HepG2 (cell line): ENCODE measurements at regions of chr14 and their contacts with region 1.

Region 1: GRCh38 chr14:32076278-32077080 is 625 bp upstream of the ARHGAP5 start:
- DNase-seq: peak; percentile 98
- ATAC-seq: peak; percentile 78
- H3K4me3 ChIP-seq: peak overlapping the region; percentile 90 to 99 (median 99)
- H3K27ac ChIP-seq: peak overlapping the region; percentile 86
- H3K4me1 ChIP-seq: peaks cover 39% of the 10 kb centered on the region
- H3K27me3 ChIP-seq: peaks cover 0 to 6% of the 10 kb centered on the region in 2 experiments; a peak in 1 of 5 replicates
- CTCF ChIP-seq: 0 out of 2 replicates have a peak, but pooled peaks have one; percentile 13
- EP300 ChIP-seq: peak in 1 of 2 experiments; percentile 54; a peak in 1 of 4 replicates
- POLR2A ChIP-seq: no peak; a peak in 2 of 4 replicates
- RAD21 ChIP-seq: no peak; the same call in none of the 2 replicates

Region 2: GRCh38 chr14:30573226-30573814 is 1503.2 kb before region 1 on chr14:
- CTCF ChIA-PET with region 1: no interaction called
- POLR2A ChIA-PET with region 1: no interaction called
- in situ Hi-C with region 1: no loop called
- intact Hi-C with region 1: loop called (anchors 5 kb)
- DNase-seq: no peak
- ATAC-seq: no peak
- H3K4me3 ChIP-seq: no peak overlapping the region
- H3K27ac ChIP-seq: no peak overlapping the region
- H3K4me1 ChIP-seq: peaks cover 40% of the 10 kb centered on the region
- H3K27me3 ChIP-seq: no peaks in the 10 kb centered on the region
- CTCF ChIP-seq: no peak
- EP300 ChIP-seq: no peak
- POLR2A ChIP-seq: no peak
- RAD21 ChIP-seq: no peak

Region 3: DNA sequence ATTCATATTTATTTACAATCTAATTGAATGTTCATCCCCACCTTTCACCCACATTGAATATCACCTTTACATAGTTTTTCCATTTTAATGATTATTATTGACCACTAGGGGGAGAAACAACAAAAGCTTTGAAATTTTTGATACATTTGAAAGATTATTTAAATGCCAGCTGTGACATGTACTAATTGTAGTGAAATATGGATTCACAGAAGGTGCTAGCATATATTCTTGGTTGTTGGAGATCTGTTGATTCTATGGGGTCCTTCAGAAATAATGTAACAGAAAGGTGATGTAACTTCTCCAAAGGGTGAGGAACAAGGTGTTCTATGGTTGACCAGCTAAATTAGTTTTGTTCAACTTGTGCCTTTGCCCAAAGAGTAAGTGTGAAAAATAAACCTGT is 566.3 kb before region 1 on chr14:
- CTCF ChIA-PET with region 1: interaction called, 5 read pairs
- POLR2A ChIA-PET with region 1: no interaction called
- in situ Hi-C with region 1: no loop called
- intact Hi-C with region 1: loop called (anchors 1 kb)
- DNase-seq: peak; percentile 48
- ATAC-seq: no peak
- H3K4me3 ChIP-seq: no peak overlapping the region
- H3K27ac ChIP-seq: no peak overlapping the region
- H3K4me1 ChIP-seq: 0 out of 2 replicates have a peak, but pooled peaks cover 5% of the 10 kb centered on the region
- H3K27me3 ChIP-seq: peaks cover 0 to 10% of the 10 kb centered on the region in 2 experiments; a peak in 2 of 5 replicates
- CTCF ChIP-seq: peak; percentile 74
- EP300 ChIP-seq: no peak
- POLR2A ChIP-seq: no peak
- RAD21 ChIP-seq: peak; percentile 67

Region 4: GRCh38 chr14:31945074-31945613 is 131.3 kb before region 1 on chr14:
- CTCF ChIA-PET with region 1: interaction called, 3 read pairs
- POLR2A ChIA-PET with region 1: interaction called, 10 read pairs
- in situ Hi-C with region 1: no loop called
- intact Hi-C with region 1: no loop called
- DNase-seq: peak; percentile 60
- ATAC-seq: peak; percentile 29
- H3K4me3 ChIP-seq: peak overlapping the region; percentile 41 to 62 (median 44)
- H3K27ac ChIP-seq: peak overlapping the region; percentile 27
- H3K4me1 ChIP-seq: peaks cover 64% of the 10 kb centered on the region
- H3K27me3 ChIP-seq: no peaks in the 10 kb centered on the region
- CTCF ChIP-seq: no peak
- EP300 ChIP-seq: no peak; a peak in 1 of 4 replicates
- POLR2A ChIP-seq: no peak
- RAD21 ChIP-seq: no peak

Region 5: GRCh38 chr14:32028599-32028998 is 47.9 kb before region 1 on chr14:
- CTCF ChIA-PET with region 1: no interaction called
- POLR2A ChIA-PET with region 1: no interaction called
- in situ Hi-C with region 1: no loop called
- intact Hi-C with region 1: no loop called
- DNase-seq: no peak
- ATAC-seq: peak; percentile 34; the same call in 2 of the 3 replicates
- H3K4me3 ChIP-seq: no peak overlapping the region
- H3K27ac ChIP-seq: no peak overlapping the region
- H3K4me1 ChIP-seq: no peaks in the 10 kb centered on the region
- H3K27me3 ChIP-seq: no peaks in the 10 kb centered on the region; a peak in 2 of 5 replicates
- CTCF ChIP-seq: no peak
- EP300 ChIP-seq: no peak
- POLR2A ChIP-seq: no peak
- RAD21 ChIP-seq: no peak

Region 6: DNA sequence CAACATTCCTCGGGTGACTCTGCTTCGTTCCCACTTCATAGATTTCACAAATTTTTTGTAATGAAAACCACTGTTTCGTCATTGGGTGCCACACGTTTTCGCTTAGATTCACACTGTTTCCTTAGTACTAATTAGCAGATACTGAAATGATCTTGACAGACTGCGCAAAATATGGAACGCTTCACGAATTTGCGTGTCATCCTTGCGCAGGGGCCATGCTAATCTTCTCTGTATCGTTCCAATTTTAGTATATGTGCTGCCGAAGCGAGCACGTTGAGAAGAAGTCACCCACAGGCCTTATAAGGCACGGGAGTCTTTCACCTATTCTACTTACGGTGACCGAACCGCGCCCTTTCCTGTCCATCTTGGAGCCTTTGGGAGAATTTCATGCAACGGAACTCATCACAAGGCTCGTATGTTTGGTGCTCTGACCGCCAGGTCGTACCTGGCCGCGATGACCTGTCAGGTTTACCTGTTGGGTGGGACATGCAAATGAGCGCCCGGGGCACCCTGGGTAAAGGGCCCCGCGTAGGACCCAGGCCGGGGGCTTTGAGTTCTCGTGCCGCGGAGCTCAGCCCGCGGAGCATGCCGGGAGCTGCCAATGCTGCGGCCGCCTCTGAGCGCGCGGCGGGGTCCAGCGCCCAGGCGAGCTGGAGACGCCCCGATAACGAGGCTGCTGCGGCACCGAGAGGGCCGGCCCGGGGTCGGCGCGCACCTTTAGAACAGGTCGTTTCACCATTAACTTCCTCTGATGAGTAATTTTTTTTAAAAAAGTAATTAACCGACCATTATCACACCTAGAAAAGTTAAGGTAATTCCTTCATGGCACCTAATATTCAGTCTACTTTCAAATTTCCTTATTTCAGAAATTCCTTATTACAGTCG is 126.8 kb after region 1 on chr14 and contains the start of gene RNU6-8:
- CTCF ChIA-PET with region 1: no interaction called
- POLR2A ChIA-PET with region 1: interaction called, 89 read pairs
- in situ Hi-C with region 1: loop called (anchors 5 kb)
- intact Hi-C with region 1: loop called (anchors 1 kb)
- DNase-seq: peak; percentile 96
- ATAC-seq: peak; percentile 84
- H3K4me3 ChIP-seq: peak within 1 kb of the TSS; percentile 69 to 81 (median 75)
- H3K27ac ChIP-seq: peak within 1 kb of the TSS; percentile 87
- H3K4me1 ChIP-seq: peaks cover 21% of the 10 kb centered on the region
- H3K27me3 ChIP-seq: no peaks in the 10 kb centered on the region; a peak in 1 of 5 replicates
- CTCF ChIP-seq: no peak; the same call in 1 of the 2 replicates
- EP300 ChIP-seq: peak in 1 of 2 experiments; percentile 35; a peak in 1 of 4 replicates
- POLR2A ChIP-seq: peak in 1 of 2 experiments; percentile 66; a peak in 2 of 4 replicates
- RAD21 ChIP-seq: peak; percentile 55
- total RNA-seq, gene RNU6-8: under 0.01 TPM in 1 of 2 replicates, not detected in the other

Region 7: DNA sequence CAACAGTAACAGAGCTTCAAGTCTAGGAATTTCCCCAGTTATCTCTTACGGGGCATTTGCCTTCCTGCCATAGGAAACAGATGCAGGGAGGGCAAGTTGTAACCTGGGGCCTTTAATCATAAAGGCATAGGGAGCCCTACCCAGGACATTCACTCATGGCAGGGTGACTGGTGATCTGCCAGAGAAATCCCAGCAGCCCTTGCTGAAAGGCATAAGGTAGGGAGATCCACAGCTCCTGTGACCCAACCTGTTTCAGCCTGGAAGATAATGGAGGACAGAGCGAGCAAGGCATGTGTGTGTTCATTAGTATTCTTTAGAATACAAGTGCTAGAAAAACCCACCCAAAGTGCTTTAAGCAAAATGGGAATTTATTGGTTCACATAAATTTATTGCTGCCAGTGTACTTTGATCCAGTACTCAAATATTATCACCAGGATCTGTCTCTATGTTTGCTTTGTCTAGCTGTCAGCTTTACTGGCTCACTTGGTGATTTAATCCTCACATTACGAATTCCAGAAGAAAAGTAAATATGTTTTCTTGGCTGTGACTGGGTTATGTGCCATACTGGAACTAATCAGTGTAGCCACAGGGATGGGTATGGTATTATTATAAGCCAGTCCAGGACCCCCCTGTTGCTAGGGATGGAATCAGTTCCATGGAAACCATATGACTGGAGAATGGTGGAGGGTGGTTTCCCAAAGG is 231.6 kb after region 1 on chr14:
- CTCF ChIA-PET with region 1: no interaction called
- POLR2A ChIA-PET with region 1: no interaction called
- in situ Hi-C with region 1: no loop called
- intact Hi-C with region 1: no loop called
- DNase-seq: peak; percentile 77
- ATAC-seq: peak; percentile 74
- H3K4me3 ChIP-seq: no peak overlapping the region
- H3K27ac ChIP-seq: no peak overlapping the region
- H3K4me1 ChIP-seq: peaks cover 20% of the 10 kb centered on the region
- H3K27me3 ChIP-seq: no peaks in the 10 kb centered on the region
- CTCF ChIP-seq: no peak
- EP300 ChIP-seq: no peak
- POLR2A ChIP-seq: no peak
- RAD21 ChIP-seq: no peak

Region 8: DNA sequence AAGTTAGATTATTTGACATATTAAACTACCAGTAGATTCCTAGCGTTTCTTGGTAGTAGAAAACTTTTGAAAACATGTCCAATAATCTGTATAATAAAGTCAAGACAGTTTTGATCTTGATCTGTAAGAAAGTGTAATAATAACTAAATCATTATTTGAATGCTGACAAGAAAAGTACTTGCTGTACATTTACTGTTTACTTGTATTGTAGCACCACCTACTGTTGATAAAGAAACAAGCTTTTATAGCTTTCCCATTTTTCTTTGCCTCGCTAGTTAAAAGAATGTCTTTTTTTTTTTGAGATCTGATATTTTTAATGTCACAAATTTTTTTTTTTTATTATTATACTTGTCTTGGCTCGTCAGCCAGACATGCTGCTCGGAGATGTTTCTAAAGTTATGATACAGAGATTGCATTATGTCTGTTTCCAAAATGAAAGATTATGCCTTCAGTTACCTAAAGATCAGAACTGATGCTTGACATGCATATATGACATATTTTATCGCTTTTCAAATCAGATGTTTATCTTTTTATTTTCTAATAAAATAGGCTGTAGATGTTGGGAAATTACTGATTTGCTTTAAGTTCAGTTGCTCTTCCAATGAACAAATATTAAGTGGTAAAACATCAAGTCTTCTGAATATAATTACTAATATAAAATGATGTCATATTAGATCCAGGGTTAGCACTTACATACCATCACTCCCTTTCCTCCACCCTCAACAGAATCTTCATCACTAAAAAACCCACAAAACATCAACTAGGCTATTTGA is 393.1 kb after region 1 on chr14:
- CTCF ChIA-PET with region 1: interaction called, 14 read pairs
- POLR2A ChIA-PET with region 1: no interaction called
- in situ Hi-C with region 1: loop called (anchors 5 kb)
- intact Hi-C with region 1: no loop called
- DNase-seq: peak; percentile 63
- ATAC-seq: peak; percentile 60
- H3K4me3 ChIP-seq: no peak overlapping the region
- H3K27ac ChIP-seq: no peak overlapping the region
- H3K4me1 ChIP-seq: peaks cover 16% of the 10 kb centered on the region
- H3K27me3 ChIP-seq: no peaks in the 10 kb centered on the region
- CTCF ChIP-seq: peak; percentile 67
- EP300 ChIP-seq: no peak
- POLR2A ChIP-seq: no peak
- RAD21 ChIP-seq: no peak